Colonic mucosa (tissue), 4 donors: ENCODE measurements at regions of chr6 and their contacts with region 1.

Region 1: GRCh38 chr6:144284783-144285547 is at the start of gene UTRN:
- DNase-seq: peak; percentile 87
- H3K4me3 ChIP-seq: peak within 1 kb of the TSS; percentile 90
- H3K27ac ChIP-seq: peak within 1 kb of the TSS; percentile 97
- H3K4me1 ChIP-seq: no peaks in the 10 kb centered on the region
- H3K27me3 ChIP-seq: no peaks in the 10 kb centered on the region
- CTCF ChIP-seq: no peak
- total RNA-seq, gene UTRN: 72.7 to 80.1 TPM

Region 2: DNA sequence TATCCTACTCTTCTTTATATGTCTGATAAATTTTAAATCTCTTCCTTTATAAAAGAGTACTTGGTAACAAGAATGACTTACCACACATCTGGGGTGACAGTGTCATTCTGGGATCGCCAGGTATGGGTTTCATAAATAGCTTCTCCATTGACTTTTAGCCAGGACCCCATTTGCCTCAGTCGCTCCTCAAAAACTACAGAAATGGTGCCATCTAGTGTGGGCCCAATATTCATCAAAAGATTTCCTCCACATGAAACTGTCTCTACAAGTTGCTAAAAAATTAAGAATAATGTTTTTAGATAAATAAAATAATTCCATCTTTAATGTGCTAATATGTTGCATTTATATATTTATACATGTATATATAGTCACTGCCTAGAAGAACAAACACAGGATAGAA is 783.1 kb before region 1 on chr6:
- intact Hi-C with region 1: no loop called
- DNase-seq: no peak
- H3K4me3 ChIP-seq: no peak overlapping the region
- H3K27ac ChIP-seq: no peak overlapping the region
- H3K4me1 ChIP-seq: no peaks in the 10 kb centered on the region
- H3K27me3 ChIP-seq: no peaks in the 10 kb centered on the region
- CTCF ChIP-seq: no peak

Region 3: DNA sequence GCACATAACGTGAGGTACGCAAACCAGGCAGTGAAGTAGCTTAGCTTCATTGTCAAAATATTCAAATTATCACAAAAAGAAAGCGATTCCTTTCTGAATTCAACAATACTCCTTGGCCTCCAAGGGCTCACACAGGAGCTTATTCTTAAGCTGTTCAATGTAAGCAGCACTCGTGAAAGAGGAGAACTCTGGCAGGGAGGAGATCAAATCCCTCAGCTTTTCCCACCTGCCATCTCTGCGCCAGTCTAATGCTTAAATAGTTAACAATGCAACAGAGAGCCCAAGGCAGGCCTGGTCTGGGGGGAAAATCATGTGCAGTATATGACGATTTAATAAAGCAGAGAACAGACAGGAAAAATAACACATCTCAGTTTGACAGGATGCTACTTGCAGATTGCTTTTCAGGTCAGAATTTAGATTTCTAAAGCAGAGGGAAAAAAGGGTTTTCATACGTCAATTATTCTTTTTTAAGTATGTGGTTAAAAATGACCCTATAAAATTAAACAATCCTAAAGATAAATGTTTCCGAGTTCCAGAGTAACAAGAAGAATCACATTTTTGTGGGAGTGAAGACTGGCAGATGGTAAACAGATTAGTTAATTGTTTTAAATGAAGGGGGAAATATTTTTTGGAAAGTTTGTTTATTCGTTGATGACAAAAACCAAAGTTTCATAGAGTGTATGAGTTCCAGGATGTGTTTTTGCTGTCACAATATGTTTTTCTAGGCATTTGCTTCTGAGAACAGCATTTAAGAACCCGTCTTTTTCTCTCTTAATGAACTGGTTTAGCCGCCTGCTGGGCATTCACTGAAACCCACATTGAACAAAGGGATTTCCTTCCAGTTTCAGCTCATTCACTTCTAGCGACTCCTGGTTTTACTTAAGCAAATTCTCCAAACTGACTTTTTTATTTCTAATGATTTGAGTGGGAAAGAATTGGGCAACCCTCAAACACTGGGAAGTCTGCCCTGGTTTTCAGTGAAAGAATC is 322.8 kb before region 1 on chr6:
- intact Hi-C with region 1: no loop called
- DNase-seq: no peak
- H3K4me3 ChIP-seq: no peak overlapping the region
- H3K27ac ChIP-seq: no peak overlapping the region
- H3K4me1 ChIP-seq: no peaks in the 10 kb centered on the region
- H3K27me3 ChIP-seq: no peaks in the 10 kb centered on the region
- CTCF ChIP-seq: no peak

Region 4: DNA sequence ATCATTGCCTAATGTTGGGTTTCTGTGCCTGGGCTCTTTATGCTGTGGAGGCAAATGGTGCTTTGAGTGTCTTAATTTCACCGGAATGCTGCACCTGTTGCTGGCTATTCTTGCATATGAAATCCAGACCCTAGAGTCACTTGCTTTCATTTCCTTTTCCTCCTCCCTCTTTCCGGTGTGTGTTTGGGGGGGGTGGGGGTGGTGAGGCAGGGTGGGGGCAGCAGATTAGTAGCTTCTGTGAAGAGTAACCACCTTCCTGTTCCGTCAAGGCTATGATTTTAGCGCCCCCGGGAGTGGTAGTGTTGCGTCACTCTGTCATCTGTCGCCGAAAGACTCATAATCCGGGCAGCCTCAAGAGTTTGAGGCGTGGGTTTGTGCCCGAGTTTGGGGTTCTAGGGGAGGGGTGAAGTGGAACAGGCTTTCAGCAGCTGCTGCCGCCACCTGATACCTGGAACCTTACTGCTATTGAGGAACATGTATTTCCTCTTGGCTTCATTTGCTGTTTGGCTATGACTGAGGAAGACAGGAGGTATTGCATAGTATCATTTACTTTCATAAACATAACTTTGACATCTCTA is 49.3 kb after region 1 on chr6:
- intact Hi-C with region 1: loop called (anchors 5 kb)
- DNase-seq: peak; percentile 52
- H3K4me3 ChIP-seq: no peak overlapping the region
- H3K27ac ChIP-seq: no peak overlapping the region
- H3K4me1 ChIP-seq: no peaks in the 10 kb centered on the region
- H3K27me3 ChIP-seq: no peaks in the 10 kb centered on the region
- CTCF ChIP-seq: no peak

Region 5: DNA sequence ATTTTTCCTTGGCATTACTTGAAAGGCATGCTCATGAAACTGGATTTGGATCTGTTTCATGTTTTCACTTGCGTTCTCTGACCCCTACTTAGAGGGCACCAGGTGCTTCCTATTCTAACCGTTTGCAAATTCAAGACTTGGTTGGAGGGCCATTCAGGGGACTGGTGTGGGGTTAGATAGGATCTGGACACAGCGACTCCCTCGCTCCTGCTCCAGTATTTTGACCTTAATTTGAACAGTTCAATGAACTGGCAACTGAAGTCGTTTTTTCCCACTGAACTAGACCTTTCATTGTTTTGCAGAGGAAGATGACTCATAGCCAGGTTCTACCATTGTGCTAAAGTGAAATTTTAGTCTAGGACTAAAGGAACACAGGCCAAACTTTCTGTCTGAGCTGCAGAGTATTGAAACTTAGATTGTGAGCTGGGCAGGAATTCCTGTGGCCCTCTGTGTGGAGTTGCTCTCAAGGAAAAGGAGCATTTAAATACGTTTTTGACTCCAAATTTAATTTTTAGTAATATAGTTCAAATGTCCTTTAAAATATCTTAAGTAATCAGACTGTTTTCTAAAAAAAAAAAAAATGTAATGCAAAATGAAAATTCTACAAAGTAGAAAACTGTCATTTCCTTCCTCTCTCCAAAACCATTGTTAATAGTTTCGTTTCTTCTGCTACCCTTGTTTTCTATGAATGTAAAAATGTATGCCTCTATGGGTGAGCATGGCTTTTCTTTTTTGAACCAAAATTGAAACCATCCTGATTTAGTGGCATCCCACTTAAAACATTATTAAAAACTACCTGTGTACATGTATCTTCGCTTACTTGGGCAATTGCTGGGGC is 64.9 kb after region 1 on chr6:
- intact Hi-C with region 1: no loop called
- DNase-seq: no peak
- H3K4me3 ChIP-seq: no peak overlapping the region
- H3K27ac ChIP-seq: peak overlapping the region; percentile 45
- H3K4me1 ChIP-seq: no peaks in the 10 kb centered on the region
- H3K27me3 ChIP-seq: no peaks in the 10 kb centered on the region
- CTCF ChIP-seq: no peak